ENCODE measurements at regions of chr1 and their contacts with region 1.

Region 1: GRCh38 chr1:109099938-109100773 is 9.6 kb downstream of the TMEM167B start:
- DNase-seq: peak; percentile 93
- ATAC-seq: peak; percentile 88
- H3K4me3 Mint-ChIP-seq: peak overlapping the region; percentile 95
- H3K27ac Mint-ChIP-seq: peak overlapping the region; percentile 98
- H3K4me1 Mint-ChIP-seq: peaks cover 19% of the 10 kb centered on the region
- H3K27me3 Mint-ChIP-seq: no peaks in the 10 kb centered on the region
- CTCF ChIP-seq: peak; percentile 37

Region 2: DNA sequence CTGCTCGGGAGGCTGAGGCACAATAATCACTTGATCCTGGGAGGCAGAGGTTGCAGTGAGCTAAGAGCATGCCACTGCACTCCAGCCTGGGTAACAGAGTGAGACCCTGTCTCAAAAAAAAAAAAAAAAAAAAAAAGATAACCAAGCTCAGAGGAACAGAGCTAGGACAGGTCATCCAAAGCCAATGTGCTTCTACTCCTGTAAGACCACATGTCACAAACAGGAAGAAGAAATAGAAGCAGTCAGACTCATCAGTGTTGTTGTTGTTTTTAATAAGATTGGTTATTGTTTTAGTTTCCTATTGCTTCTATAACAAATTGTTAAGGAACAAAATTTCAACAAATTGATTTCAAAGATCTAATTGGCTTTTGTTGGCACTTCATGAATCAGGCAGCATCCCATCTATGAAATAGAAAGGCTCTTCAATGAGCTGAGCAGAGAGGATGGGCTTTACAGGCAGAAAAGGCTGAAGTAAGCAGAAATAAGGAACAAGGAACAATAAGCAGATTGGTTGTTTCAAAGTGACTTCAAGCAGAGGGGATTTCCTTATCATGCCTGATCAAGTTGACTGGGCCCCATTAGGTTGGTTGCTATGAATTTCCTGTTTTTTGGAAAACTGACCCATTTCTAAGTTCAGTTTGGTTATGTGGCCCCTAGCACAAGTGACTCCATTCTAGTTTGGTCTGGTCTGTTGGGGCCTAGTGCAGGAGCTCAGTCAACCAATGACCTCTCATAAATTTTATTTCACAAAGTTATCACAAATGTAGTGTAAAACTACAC is 237.3 kb before region 1 on chr1:
- CTCF ChIA-PET with region 1: no interaction called
- POLR2A ChIA-PET with region 1: interaction called, 4 read pairs
- intact Hi-C with region 1: loop called (anchors 1 kb)
- DNase-seq: no peak
- ATAC-seq: peak; percentile 96
- H3K4me3 Mint-ChIP-seq: no peak overlapping the region
- H3K27ac Mint-ChIP-seq: peak overlapping the region; percentile 81
- H3K4me1 Mint-ChIP-seq: peaks cover 22% of the 10 kb centered on the region
- H3K27me3 Mint-ChIP-seq: peaks cover 1% of the 10 kb centered on the region
- CTCF ChIP-seq: no peak

Region 3: DNA sequence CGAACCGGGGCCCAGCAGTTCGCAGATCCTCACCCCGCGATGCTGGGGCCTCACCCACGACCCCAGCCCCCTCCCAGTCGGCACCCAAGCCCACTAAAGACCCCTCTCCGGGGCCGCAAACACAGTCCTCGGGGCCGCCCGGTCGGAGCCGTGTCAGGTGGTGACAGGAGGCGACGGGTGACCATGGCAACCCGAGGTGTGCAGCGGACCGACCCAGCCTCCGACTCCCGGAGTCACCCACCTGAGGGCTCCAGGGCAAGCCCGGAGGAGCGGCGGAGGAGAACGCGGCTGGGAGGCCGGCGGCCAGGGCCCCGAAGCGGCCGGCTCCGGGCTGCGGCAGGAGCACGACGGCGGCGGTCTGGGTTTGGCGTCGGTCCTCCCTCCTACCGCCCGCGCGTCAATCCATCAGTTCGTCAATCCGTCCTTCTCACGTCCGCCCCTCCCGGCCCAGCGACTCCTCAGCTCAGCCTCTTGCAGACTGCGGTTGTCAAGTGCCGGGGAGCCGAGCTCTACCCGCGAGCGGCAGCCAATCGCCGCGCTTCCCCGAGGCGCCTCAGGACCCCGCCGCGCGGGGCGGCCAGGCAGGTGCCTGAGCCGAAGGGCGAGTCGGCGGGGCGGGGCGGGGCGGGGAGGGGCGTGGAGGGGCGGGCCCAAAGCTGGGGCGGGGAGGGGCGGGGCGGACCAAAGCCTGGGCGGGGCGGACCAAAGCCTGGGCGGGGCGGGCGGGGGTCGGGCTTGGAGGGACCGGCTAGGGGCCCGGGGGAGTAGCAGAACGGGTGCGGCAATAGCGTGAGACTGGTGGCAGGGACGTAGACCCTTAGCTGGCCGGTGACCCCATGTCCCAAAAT is 58.3 kb before region 1 on chr1 and contains the start of gene WDR47:
- CTCF ChIA-PET with region 1: interaction called, 5 read pairs
- POLR2A ChIA-PET with region 1: interaction called, 52 read pairs
- intact Hi-C with region 1: loop called (anchors 1 kb)
- DNase-seq: peak; percentile 89
- ATAC-seq: peak; percentile 96
- H3K4me3 Mint-ChIP-seq: peak within 1 kb of the TSS; percentile 88
- H3K27ac Mint-ChIP-seq: peak within 1 kb of the TSS; percentile 60
- H3K4me1 Mint-ChIP-seq: peaks cover 15% of the 10 kb centered on the region
- H3K27me3 Mint-ChIP-seq: no peaks in the 10 kb centered on the region
- CTCF ChIP-seq: no peak
- total RNA-seq, gene WDR47: 10.3 and 10.9 TPM in 2 replicates

Region 4: GRCh38 chr1:109112652-109113285 is 12.6 kb after region 1 on chr1:
- CTCF ChIA-PET with region 1: interaction called, 18 read pairs
- POLR2A ChIA-PET with region 1: interaction called, 57 read pairs
- intact Hi-C with region 1: loop called (anchors 1 kb)
- DNase-seq: peak; percentile 83
- ATAC-seq: peak; percentile 75
- H3K4me3 Mint-ChIP-seq: peak overlapping the region; percentile 77
- H3K27ac Mint-ChIP-seq: peak overlapping the region; percentile 56
- H3K4me1 Mint-ChIP-seq: peaks cover 25% of the 10 kb centered on the region
- H3K27me3 Mint-ChIP-seq: peaks cover 27% of the 10 kb centered on the region
- CTCF ChIP-seq: peak; percentile 88

Region 5: DNA sequence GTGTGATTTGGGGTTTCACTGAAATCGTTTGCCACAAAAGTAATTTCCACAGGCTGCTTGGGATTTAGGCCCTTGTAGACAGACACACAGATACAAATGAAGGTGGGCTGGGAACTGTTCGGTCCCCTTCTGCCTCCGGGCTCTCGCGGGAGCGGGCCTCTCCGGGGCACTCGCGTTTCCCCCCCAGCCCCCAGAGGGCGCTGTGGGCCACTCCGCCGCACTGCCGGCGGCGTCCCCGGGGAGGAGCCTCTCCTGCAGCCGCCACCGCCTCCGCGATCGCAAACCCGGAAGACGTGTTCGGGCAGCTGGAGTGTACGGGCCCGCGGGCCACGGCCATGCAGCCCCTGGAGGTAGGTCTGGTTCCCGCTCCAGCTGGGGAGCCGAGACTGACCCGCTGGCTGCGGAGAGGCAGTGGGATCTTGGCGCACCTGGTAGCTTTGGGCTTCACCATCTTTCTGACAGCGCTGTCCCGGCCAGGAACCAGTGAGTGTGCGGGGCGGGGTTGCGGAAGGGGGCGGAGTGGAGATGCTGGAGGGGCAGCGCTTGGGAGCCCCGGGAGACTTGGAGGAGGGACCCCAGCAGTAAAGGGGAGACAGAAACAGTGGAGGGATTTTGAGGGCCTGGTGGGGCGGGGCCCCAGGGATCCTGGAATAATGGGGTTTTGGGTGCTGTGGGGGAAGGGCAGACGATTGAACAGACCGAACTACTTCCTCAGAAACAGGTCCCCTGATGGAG is 393.8 kb after region 1 on chr1 and contains the start of gene CYB561D1:
- CTCF ChIA-PET with region 1: no interaction called
- POLR2A ChIA-PET with region 1: interaction called, 4 read pairs
- intact Hi-C with region 1: loop called (anchors 5 kb)
- DNase-seq: peak; percentile 95
- ATAC-seq: peak; percentile 89
- H3K4me3 Mint-ChIP-seq: peak within 1 kb of the TSS; percentile 98
- H3K27ac Mint-ChIP-seq: peak within 1 kb of the TSS; percentile 91
- H3K4me1 Mint-ChIP-seq: peaks cover 43% of the 10 kb centered on the region
- H3K27me3 Mint-ChIP-seq: no peaks in the 10 kb centered on the region
- CTCF ChIP-seq: peak; percentile 81
- total RNA-seq, gene CYB561D1: 17.1 and 18.1 TPM in 2 replicates

Measured in activated B cell treated with CpG ODN at 0.5 μM for 24 hours (primary cell).